Right ventricle myocardium superior (tissue), 1 donor: ENCODE measurements at regions of chr6 and their contacts with region 1.

Region 1: GRCh38 chr6:109009236-109009961 is 85.2 kb downstream of the SESN1 start:
- DNase-seq: peak; percentile 98
- ATAC-seq: peak; percentile 96

Region 2: GRCh38 chr6:109059571-109060021 is 50.2 kb after region 1 on chr6:
- intact Hi-C with region 1: loop called (anchors 5 kb)
- DNase-seq: no peak
- ATAC-seq: peak; percentile 66

Region 3: DNA sequence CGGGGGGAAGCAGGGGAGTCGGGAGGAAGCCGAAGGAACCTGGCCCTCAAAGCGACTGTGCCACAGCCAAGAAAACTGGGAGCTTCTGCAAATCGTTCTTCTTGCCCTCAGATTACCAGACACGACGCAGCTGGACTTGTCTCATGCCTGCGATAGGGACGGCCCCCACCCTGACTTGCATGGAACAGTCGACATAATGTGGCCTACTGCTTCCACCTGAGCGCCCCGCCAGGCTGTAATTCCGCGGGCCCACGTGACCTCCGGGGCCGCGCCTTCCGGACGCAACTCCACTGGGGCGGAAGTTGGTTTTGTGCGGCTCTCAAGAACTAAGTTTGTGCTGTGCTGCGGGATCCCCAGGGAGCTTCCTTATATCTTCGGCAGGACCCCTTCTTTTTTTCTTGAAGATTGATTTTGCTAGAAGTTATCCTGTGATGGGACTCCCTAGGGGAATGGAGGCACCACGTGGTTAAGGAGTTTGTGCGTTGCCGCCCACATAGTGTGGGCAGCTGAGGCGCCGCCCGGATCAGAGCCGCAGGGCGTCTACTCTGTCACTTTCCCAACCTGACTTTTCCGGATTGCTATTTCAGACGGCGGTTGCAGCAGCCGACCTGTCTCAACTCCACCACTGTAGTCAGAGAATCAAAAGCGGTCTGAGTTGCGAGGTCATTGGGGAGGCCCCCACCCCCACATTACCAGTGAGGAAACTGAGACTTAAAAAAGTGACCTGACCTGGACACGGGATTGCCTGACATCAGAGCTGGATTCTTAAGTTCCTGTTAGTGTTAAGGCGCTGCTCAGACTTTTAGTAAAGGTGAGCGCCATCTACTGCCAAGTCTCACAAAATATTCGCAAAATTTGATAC is 373.4 kb after region 1 on chr6:
- intact Hi-C with region 1: no loop called
- DNase-seq: peak; percentile 96
- ATAC-seq: peak; percentile 95

Region 4: GRCh38 chr6:109434456-109434855 is 425.1 kb after region 1 on chr6:
- intact Hi-C with region 1: no loop called
- DNase-seq: no peak
- ATAC-seq: no peak